ENCODE measurements at regions of chr22 and their contacts with region 1.

Region 1: DNA sequence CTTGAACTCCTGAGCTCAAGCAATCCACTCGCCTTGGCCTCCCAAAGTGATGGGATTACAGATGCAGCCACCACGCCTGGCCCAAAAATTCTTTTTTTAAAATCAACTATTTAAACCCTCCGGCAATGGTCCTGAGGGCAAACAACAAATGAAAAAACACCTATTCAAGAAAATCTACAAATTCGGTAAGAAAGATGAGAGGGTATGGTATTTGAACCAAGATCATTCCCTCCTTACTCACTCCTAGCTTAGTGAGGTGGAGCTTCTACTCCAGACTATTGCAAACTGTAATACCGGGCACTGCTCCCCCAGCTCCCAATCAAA is 2.1 kb downstream of the NF2 start:
- DNase-seq: no peak
- H3K4me3 ChIP-seq: peak overlapping the region; percentile 90; the same call in 1 of the 2 replicates
- H3K27ac ChIP-seq: no peak overlapping the region
- H3K4me1 ChIP-seq: peaks cover 40% of the 10 kb centered on the region
- H3K27me3 ChIP-seq: no peaks in the 10 kb centered on the region
- CTCF ChIP-seq: no peak

Region 2: GRCh38 chr22:29408945-29409344 is 196.5 kb before region 1 on chr22:
- CTCF ChIA-PET with region 1: no interaction called
- POLR2A ChIA-PET with region 1: no interaction called
- intact Hi-C with region 1: no loop called
- DNase-seq: no peak
- H3K4me3 ChIP-seq: no peak overlapping the region
- H3K27ac ChIP-seq: no peak overlapping the region
- H3K4me1 ChIP-seq: peaks cover 3% of the 10 kb centered on the region; the same call in 1 of the 2 replicates
- H3K27me3 ChIP-seq: no peaks in the 10 kb centered on the region
- CTCF ChIP-seq: no peak

Region 3: DNA sequence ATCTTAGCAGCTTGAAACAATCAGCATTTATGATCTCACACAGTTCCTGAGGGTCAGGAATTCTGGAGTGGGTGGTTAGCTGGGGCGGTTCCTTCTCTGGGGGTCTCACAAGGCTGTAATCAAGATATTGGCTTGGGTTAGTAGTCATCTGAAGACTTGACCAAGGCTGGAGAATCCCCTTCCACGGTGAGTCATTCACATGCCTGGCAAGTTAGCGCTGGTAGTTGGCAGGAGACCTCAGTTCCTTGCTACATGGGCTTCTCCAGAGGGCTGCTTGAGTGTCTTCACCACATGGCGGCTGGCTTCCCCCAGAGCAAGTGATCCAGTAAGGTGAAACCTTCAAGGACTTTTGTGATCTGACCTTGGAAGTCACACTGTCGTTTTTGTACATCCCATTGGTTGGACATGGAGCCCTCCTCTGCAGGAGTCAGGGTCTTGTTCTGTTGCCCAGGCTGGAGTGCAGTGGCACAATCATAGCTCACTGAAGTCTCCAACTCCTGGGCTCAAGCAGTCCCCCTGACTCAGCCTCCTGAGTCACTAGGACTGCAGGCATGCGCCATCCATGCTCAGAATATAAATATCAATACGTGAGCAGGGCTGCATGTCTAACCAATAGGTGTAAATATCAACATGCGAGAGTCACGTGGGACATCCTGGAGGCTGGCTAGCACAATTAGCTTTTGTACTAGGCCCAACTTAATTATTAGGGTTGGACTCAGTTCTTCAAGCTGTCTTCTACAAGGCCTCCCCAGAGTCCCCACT is 17.4 kb before region 1 on chr22:
- CTCF ChIA-PET with region 1: interaction called, 12 read pairs
- POLR2A ChIA-PET with region 1: no interaction called
- intact Hi-C with region 1: no loop called
- DNase-seq: peak in 1 of 2 experiments; percentile 77
- H3K4me3 ChIP-seq: no peak overlapping the region
- H3K27ac ChIP-seq: no peak overlapping the region
- H3K4me1 ChIP-seq: peaks cover 9% of the 10 kb centered on the region; the same call in 1 of the 2 replicates
- H3K27me3 ChIP-seq: no peaks in the 10 kb centered on the region
- CTCF ChIP-seq: no peak

Measured in PC-9 (cell line).